ENCODE measurements at regions of chr3 and their contacts with region 1.

Region 1: DNA sequence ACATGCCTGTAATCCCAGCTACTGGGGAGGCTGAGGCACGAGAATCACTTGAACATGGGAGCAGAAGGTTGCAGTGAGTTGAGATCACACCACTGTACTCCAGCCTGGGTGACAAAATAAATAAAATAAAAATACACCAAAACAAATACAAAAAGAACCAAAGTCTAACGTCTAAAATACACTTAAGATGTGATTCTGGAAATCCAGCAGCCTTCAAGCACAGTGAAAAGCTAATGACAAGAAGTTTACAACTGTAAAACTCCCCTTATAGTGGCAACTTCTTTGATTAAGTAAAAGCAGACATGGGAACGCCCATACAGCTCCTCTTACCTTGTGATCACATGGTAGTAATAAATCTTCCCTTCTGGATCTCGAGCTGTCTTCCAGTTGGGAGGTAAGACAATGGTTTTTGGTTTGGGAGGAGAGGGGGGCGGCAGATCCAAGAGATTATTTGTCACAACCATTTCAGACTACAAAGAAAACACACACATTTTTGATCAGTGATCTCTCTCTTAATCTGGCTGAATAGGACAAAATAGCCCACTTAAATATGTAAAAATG is 62.8 kb downstream of the NBEAL2 start:
- DNase-seq: no peak
- H3K4me3 ChIP-seq: no peak overlapping the region
- H3K27ac ChIP-seq: no peak overlapping the region
- H3K4me1 ChIP-seq: no peaks in the 10 kb centered on the region
- H3K27me3 ChIP-seq: no peaks in the 10 kb centered on the region
- CTCF ChIP-seq: no peak
- POLR2A ChIP-seq: no peak

Region 2: GRCh38 chr3:46960081-46960701 is 82.1 kb before region 1 on chr3:
- CTCF ChIA-PET with region 1: no interaction called
- POLR2A ChIA-PET with region 1: no interaction called
- dilution Hi-C with region 1: no loop called
- intact Hi-C with region 1: no loop called
- DNase-seq: peak; percentile 92
- H3K4me3 ChIP-seq: peak overlapping the region in 2 of 3 experiments; percentile 0 to 40
- H3K27ac ChIP-seq: peak overlapping the region; percentile 82
- H3K4me1 ChIP-seq: peaks cover 33% of the 10 kb centered on the region
- H3K27me3 ChIP-seq: no peaks in the 10 kb centered on the region
- CTCF ChIP-seq: no peak
- POLR2A ChIP-seq: no peak

Region 3: DNA sequence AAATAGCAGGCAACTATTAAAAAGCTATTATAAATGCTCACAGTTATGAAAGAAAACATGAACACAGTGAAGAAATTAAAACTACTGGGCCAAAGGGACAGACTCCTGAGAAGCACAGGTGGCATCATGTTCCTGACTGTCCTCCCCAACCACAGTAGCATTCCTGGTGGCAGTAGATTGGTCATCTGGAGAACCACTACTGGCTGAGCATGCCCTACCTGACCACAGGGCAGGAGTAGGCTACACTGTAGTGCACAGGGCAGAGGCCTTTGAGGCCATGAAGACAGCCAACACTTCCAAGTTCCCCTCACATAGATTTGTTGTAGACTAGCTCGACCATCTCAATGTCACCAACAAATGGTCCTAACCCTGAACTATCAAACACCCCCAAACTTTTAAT is 13.6 kb before region 1 on chr3:
- CTCF ChIA-PET with region 1: interaction called, 21 read pairs
- POLR2A ChIA-PET with region 1: no interaction called
- dilution Hi-C with region 1: no loop called
- intact Hi-C with region 1: no loop called
- DNase-seq: no peak
- H3K4me3 ChIP-seq: no peak overlapping the region
- H3K27ac ChIP-seq: no peak overlapping the region
- H3K4me1 ChIP-seq: no peaks in the 10 kb centered on the region
- H3K27me3 ChIP-seq: no peaks in the 10 kb centered on the region
- CTCF ChIP-seq: no peak
- POLR2A ChIP-seq: no peak

Region 4: DNA sequence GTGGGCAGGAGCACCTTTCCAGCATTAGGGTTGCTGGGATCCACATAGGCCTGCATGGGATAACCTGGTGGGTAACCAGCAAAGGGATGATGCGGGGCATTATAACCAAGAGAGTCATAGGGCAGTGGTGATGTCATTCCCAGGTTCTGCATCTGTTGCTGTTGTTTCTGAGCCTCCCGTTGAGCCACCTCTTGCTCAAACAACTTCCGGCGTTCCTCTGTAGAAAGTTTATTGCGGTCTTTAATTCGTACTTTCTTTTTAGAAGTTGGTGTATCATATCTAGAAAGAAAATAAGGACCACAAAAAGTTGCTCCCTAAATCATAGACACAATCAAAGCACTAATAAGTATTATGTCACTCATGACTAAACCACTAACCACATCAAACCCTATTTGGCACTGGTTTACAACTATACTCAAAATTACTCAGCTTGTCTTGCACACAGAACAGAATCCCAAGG is 14.9 kb after region 1 on chr3:
- CTCF ChIA-PET with region 1: no interaction called
- POLR2A ChIA-PET with region 1: no interaction called
- dilution Hi-C with region 1: no loop called
- intact Hi-C with region 1: no loop called
- DNase-seq: no peak
- H3K4me3 ChIP-seq: no peak overlapping the region
- H3K27ac ChIP-seq: no peak overlapping the region
- H3K4me1 ChIP-seq: no peaks in the 10 kb centered on the region
- H3K27me3 ChIP-seq: no peaks in the 10 kb centered on the region
- CTCF ChIP-seq: no peak
- POLR2A ChIP-seq: no peak

Region 5: GRCh38 chr3:47113669-47114365 is 71.5 kb after region 1 on chr3:
- CTCF ChIA-PET with region 1: no interaction called
- POLR2A ChIA-PET with region 1: no interaction called
- dilution Hi-C with region 1: no loop called
- intact Hi-C with region 1: no loop called
- DNase-seq: no peak
- H3K4me3 ChIP-seq: no peak overlapping the region
- H3K27ac ChIP-seq: no peak overlapping the region
- H3K4me1 ChIP-seq: peaks cover 7% of the 10 kb centered on the region
- H3K27me3 ChIP-seq: no peaks in the 10 kb centered on the region
- CTCF ChIP-seq: no peak
- POLR2A ChIP-seq: no peak

Measured in endothelial cell of umbilical vein (primary cell).